ENCODE measurements at regions of chr3 and their contacts with region 1.

Region 1: DNA sequence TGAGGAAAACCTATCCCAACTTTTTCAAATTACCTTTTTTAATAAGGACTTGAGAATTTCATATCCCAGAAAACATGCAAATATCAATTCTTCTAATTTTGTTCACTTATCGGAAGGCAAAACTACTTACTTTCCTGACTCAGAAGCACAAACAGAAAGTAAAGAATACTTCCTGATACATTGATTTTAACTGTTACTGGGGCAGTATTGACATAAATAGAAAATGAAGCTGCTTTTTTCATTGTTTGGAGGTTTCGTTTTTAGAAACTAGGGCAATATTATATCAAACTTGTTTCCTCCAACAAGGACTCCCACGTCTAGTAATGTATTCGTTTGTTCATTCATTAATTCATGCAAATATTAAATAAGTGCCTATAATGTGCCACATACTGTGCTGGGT is 19.1 kb downstream of the PAQR9 start:
- DNase-seq: no peak
- H3K4me3 Mint-ChIP-seq: no peak overlapping the region
- H3K27ac Mint-ChIP-seq: no peak overlapping the region
- H3K4me1 Mint-ChIP-seq: peaks cover 36% of the 10 kb centered on the region
- H3K27me3 Mint-ChIP-seq: peaks cover 11% of the 10 kb centered on the region
- CTCF ChIP-seq: no peak

Region 2: DNA sequence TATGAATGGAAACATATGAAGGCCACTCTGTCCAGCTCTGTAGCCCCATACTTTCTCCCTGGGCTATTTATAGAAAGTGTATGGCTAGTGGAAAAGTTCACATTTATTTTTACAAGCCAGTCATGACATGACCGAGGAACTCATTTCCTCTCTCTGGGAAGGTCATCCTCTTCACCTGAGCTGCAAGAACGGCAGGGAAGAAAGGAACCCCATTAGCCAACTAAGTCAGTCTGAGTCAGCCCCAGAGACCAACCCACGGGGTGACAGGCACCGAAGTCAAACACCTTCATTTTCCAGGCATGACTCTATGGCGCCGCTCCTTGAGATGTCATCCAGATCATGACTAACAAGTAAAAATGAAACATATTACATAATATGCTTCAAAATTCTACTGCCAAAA is 14.4 kb after region 1 on chr3:
- CTCF ChIA-PET with region 1: interaction called, 3 read pairs
- intact Hi-C with region 1: loop called (anchors 2 kb)
- DNase-seq: peak; percentile 74
- H3K4me3 Mint-ChIP-seq: no peak overlapping the region
- H3K27ac Mint-ChIP-seq: peak overlapping the region; percentile 60
- H3K4me1 Mint-ChIP-seq: peaks cover 49% of the 10 kb centered on the region
- H3K27me3 Mint-ChIP-seq: no peaks in the 10 kb centered on the region
- CTCF ChIP-seq: no peak

Measured in Calu3 (cell line).